ENCODE measurements at regions of chr21 and their contacts with region 1.

Region 1: GRCh38 chr21:44962403-44962966 is 22.7 kb downstream of the SLX9 start:
- DNase-seq: no peak
- H3K4me3 Mint-ChIP-seq: no peak overlapping the region
- H3K27ac Mint-ChIP-seq: no peak overlapping the region
- H3K4me1 Mint-ChIP-seq: peaks cover 29% of the 10 kb centered on the region
- H3K27me3 Mint-ChIP-seq: no peaks in the 10 kb centered on the region

Region 2: GRCh38 chr21:44949779-44950198 is 12.7 kb before region 1 on chr21:
- CTCF ChIA-PET with region 1: interaction called, 12 read pairs
- POLR2A ChIA-PET with region 1: no interaction called
- DNase-seq: peak; percentile 84
- H3K4me3 Mint-ChIP-seq: no peak overlapping the region
- H3K27ac Mint-ChIP-seq: no peak overlapping the region
- H3K4me1 Mint-ChIP-seq: peaks cover 8% of the 10 kb centered on the region
- H3K27me3 Mint-ChIP-seq: no peaks in the 10 kb centered on the region